ENCODE measurements at regions of chr7 and their contacts with region 1.

Region 1: DNA sequence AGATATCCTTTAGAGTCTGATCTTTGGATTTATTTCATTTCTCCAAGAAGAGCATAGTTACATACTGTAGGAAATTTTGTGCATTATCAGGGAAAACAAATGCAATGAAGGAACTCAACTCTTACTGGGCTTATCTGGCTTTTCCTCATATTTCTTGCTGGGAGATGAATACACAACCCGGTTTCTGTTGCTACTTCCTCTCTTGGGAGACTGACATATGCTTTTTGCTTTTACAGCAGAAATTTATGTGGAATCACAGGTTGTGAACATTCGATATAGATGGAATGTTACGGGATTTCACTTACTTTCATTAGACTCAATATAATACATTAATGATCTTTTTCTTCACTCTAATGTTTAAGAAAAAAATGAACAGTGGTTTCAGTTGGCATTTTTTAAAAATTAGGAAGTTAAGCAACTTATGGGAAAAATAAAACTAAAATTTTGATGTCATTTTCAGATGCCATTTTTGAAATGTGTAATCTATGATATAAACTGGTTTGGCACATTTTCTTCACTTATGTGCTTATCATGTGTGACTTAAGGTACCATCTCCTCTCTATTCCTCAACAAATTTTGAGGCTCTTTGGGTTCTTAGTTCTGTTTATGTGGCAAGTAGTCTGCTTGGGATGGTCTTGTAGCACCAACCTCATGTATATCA is 7.1 kb downstream of the SND1 start:
- DNase-seq: no peak
- ATAC-seq: no peak
- H3K4me3 ChIP-seq: no peak overlapping the region
- H3K27ac ChIP-seq: no peak overlapping the region
- H3K4me1 ChIP-seq: peaks cover 5% of the 10 kb centered on the region
- H3K27me3 ChIP-seq: no peaks in the 10 kb centered on the region
- CTCF ChIP-seq: no peak
- POLR2A ChIP-seq: no peak
- RAD21 ChIP-seq: no peak

Region 2: GRCh38 chr7:127678947-127679346 is 19.8 kb after region 1 on chr7:
- CTCF ChIA-PET with region 1: no interaction called
- POLR2A ChIA-PET with region 1: no interaction called
- dilution Hi-C with region 1: no loop called
- in situ Hi-C with region 1: no loop called
- intact Hi-C with region 1: loop called (anchors 2 kb)
- DNase-seq: peak; percentile 71
- ATAC-seq: peak; percentile 85
- H3K4me3 ChIP-seq: no peak overlapping the region
- H3K27ac ChIP-seq: peak overlapping the region; percentile 76
- H3K4me1 ChIP-seq: peaks cover 13% of the 10 kb centered on the region
- H3K27me3 ChIP-seq: no peaks in the 10 kb centered on the region
- CTCF ChIP-seq: no peak
- POLR2A ChIP-seq: no peak
- RAD21 ChIP-seq: no peak

Region 3: GRCh38 chr7:127938588-127938987 is 279.5 kb after region 1 on chr7:
- CTCF ChIA-PET with region 1: no interaction called
- POLR2A ChIA-PET with region 1: no interaction called
- dilution Hi-C with region 1: no loop called
- in situ Hi-C with region 1: no loop called
- intact Hi-C with region 1: no loop called
- DNase-seq: peak; percentile 88
- ATAC-seq: peak; percentile 96
- H3K4me3 ChIP-seq: no peak overlapping the region
- H3K27ac ChIP-seq: no peak overlapping the region
- H3K4me1 ChIP-seq: peaks cover 5% of the 10 kb centered on the region; the same call in 1 of the 2 replicates
- H3K27me3 ChIP-seq: no peaks in the 10 kb centered on the region
- CTCF ChIP-seq: peak; percentile 32
- POLR2A ChIP-seq: no peak
- RAD21 ChIP-seq: peak; percentile 52

Measured in IMR-90 (cell line).